Activated CD4-positive, alpha-beta memory T cell treated with anti-CD3 and anti-CD28 coated beads for 36 hours (primary cell): ENCODE measurements at regions of chr12 and their contacts with region 1.

Region 1: GRCh38 chr12:92208613-92209121 is 63.0 kb upstream of the BTG1 start:
- DNase-seq: no peak
- H3K4me3 Mint-ChIP-seq: peak overlapping the region; percentile 70
- H3K27ac Mint-ChIP-seq: peak overlapping the region; percentile 87
- H3K4me1 Mint-ChIP-seq: peaks cover 35% of the 10 kb centered on the region
- H3K27me3 Mint-ChIP-seq: no peaks in the 10 kb centered on the region

Region 2: GRCh38 chr12:91382081-91382543 is 826.6 kb before region 1 on chr12:
- CTCF ChIA-PET with region 1: no interaction called
- POLR2A ChIA-PET with region 1: no interaction called
- intact Hi-C with region 1: loop called (anchors 1 kb)
- DNase-seq: peak; percentile 86
- H3K4me3 Mint-ChIP-seq: peak overlapping the region; percentile 60
- H3K27ac Mint-ChIP-seq: no peak overlapping the region
- H3K4me1 Mint-ChIP-seq: peaks cover 5% of the 10 kb centered on the region
- H3K27me3 Mint-ChIP-seq: peaks cover 4% of the 10 kb centered on the region

Region 3: GRCh38 chr12:92065018-92065499 is 143.6 kb before region 1 on chr12:
- CTCF ChIA-PET with region 1: no interaction called
- POLR2A ChIA-PET with region 1: no interaction called
- intact Hi-C with region 1: loop called (anchors 1 kb)
- DNase-seq: peak; percentile 74
- H3K4me3 Mint-ChIP-seq: peak overlapping the region; percentile 59
- H3K27ac Mint-ChIP-seq: peak overlapping the region; percentile 82
- H3K4me1 Mint-ChIP-seq: peaks cover 49% of the 10 kb centered on the region
- H3K27me3 Mint-ChIP-seq: no peaks in the 10 kb centered on the region

Region 4: GRCh38 chr12:92297932-92298696 is 89.4 kb after region 1 on chr12:
- CTCF ChIA-PET with region 1: no interaction called
- POLR2A ChIA-PET with region 1: no interaction called
- intact Hi-C with region 1: loop called (anchors 5 kb)
- DNase-seq: peak; percentile 26
- H3K4me3 Mint-ChIP-seq: peak overlapping the region; percentile 30
- H3K27ac Mint-ChIP-seq: peak overlapping the region; percentile 79
- H3K4me1 Mint-ChIP-seq: peaks cover 13% of the 10 kb centered on the region
- H3K27me3 Mint-ChIP-seq: no peaks in the 10 kb centered on the region

Region 5: DNA sequence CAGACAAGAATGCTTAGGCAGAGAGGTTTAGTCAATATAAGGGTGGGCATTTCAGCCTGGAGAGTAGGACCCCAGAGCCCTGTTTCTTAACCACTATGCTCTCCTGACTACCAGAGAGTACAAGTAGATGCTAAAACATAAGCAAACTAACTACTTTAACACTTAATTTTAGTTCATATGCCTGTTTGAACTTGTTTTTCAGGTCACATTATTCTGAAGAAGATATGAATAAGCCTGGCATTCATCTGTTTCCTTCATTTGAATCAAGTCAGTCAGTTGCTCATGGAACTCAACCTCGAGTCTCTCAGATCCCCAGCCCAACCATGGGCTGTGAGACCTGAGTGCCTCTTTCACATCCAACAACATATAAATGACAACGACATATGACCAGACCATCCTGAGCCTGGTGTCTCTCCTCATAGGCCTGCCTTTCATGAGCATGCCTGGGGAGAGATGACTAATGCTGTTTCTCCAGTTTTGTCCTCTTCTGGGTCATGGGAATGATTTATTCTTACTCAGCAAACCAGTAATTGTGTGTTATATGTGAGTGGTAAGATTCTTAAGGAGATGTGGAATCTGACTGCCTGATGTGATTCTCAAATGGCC is 188.1 kb after region 1 on chr12:
- CTCF ChIA-PET with region 1: no interaction called
- POLR2A ChIA-PET with region 1: no interaction called
- intact Hi-C with region 1: loop called (anchors 2 kb)
- DNase-seq: peak; percentile 61
- H3K4me3 Mint-ChIP-seq: no peak overlapping the region
- H3K27ac Mint-ChIP-seq: peak overlapping the region; percentile 86
- H3K4me1 Mint-ChIP-seq: peaks cover 90% of the 10 kb centered on the region
- H3K27me3 Mint-ChIP-seq: no peaks in the 10 kb centered on the region